ENCODE measurements at regions of chr22 and their contacts with region 1.

Region 1: GRCh38 chr22:17281440-17281841 is 62.2 kb upstream of the ADA2 start:
- DNase-seq: peak in 5 of 9 donors; percentile 27 to 55 (median 43)
- ATAC-seq: peak; percentile 56
- H3K4me3 ChIP-seq: no peak overlapping the region
- H3K4me3 Mint-ChIP-seq: peak overlapping the region; percentile 27 to 82 (median 71)
- H3K27ac ChIP-seq: no peak overlapping the region
- H3K27ac Mint-ChIP-seq: peak overlapping the region; percentile 1 to 95 (median 53)
- H3K4me1 ChIP-seq: peaks cover 0 to 10% of the 10 kb centered on the region in 2 donors
- H3K4me1 Mint-ChIP-seq: peaks cover 14 to 44% (median 16%) of the 10 kb centered on the region in 7 donors
- H3K27me3 ChIP-seq: no peaks in the 10 kb centered on the region
- H3K27me3 Mint-ChIP-seq: peaks cover 0 to 17% (median 0%) of the 10 kb centered on the region in 5 donors

Region 2: DNA sequence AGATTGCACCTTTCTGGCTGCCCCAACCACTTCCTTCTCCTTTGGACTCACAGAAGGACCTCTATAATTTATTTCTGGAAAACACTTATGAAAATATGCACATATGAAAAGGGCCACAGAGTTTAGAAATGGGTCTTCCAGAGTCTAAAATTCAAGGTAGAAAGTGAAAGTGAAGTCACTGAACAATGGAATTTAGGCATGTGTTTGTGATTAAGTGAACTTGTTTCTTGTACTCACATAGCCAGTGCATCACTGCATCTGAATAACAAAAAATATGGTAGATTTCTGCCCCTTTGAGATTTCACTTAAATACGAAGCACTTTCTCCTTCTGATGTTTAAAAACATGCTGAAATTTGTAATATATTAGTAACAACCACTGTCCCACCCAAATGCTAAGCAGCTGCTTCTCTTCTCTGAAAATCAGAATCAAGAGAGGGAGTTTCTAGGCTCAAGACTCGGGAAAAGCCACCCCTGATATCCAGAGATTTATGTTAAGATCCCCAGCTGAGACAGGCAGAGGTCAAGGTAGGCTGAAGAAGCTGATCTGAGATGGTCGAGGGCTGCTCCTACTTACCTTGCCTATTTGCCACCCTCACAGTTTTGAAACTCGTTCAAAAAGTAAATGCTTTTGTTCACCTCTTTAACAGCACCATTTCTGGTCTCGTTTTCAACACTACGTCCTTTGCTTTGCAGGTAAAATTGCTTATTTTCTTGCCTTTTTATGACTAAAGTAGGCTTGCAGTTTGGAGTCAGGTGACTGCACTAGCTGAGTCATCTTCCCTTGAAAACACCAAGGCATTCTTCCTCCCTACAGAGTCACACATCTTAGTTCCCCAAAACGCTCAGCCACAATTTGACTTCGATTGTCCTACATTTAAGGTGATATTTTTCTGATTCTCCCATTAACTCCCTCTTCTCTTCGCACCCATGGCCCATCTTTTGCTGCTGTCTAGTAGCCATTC is 456.4 kb before region 1 on chr22 and contains the start of gene XKR3:
- CTCF ChIA-PET with region 1: no interaction called
- POLR2A ChIA-PET with region 1: no interaction called
- intact Hi-C with region 1: no loop called
- DNase-seq: peak in 1 of 9 donors; percentile 6
- ATAC-seq: peak; percentile 68
- H3K4me3 ChIP-seq: peak within 1 kb of the TSS; percentile 15
- H3K4me3 Mint-ChIP-seq: peak within 1 kb of the TSS; percentile 64 to 86 (median 79)
- H3K27ac ChIP-seq: peak within 1 kb of the TSS; percentile 8
- H3K27ac Mint-ChIP-seq: peak within 1 kb of the TSS; percentile 16 to 87 (median 71)
- H3K4me1 ChIP-seq: peaks cover 0 to 4% of the 10 kb centered on the region in 2 donors
- H3K4me1 Mint-ChIP-seq: peaks cover 9 to 28% (median 22%) of the 10 kb centered on the region in 7 donors
- H3K27me3 ChIP-seq: no peaks in the 10 kb centered on the region
- H3K27me3 Mint-ChIP-seq: peaks cover 0 to 3% (median 0%) of the 10 kb centered on the region in 5 donors
- total RNA-seq, gene XKR3: not detected

Region 3: GRCh38 chr22:17237038-17237668 is 44.3 kb before region 1 on chr22:
- CTCF ChIA-PET with region 1: no interaction called
- POLR2A ChIA-PET with region 1: no interaction called
- intact Hi-C with region 1: loop called in 1 of 2 experiments (anchors 5 kb)
- DNase-seq: peak in 6 of 9 donors; percentile 31 to 50 (median 40)
- ATAC-seq: peak; percentile 80
- H3K4me3 ChIP-seq: peak overlapping the region; percentile 61
- H3K4me3 Mint-ChIP-seq: peak overlapping the region; percentile 78 to 96 (median 91)
- H3K27ac ChIP-seq: peak overlapping the region; percentile 73
- H3K27ac Mint-ChIP-seq: peak overlapping the region; percentile 92 to 99 (median 97)
- H3K4me1 ChIP-seq: peaks cover 0 to 12% of the 10 kb centered on the region in 2 donors
- H3K4me1 Mint-ChIP-seq: peaks cover 8 to 27% (median 11%) of the 10 kb centered on the region in 7 donors
- H3K27me3 ChIP-seq: no peaks in the 10 kb centered on the region
- H3K27me3 Mint-ChIP-seq: no peaks in the 10 kb centered on the region

Region 4: DNA sequence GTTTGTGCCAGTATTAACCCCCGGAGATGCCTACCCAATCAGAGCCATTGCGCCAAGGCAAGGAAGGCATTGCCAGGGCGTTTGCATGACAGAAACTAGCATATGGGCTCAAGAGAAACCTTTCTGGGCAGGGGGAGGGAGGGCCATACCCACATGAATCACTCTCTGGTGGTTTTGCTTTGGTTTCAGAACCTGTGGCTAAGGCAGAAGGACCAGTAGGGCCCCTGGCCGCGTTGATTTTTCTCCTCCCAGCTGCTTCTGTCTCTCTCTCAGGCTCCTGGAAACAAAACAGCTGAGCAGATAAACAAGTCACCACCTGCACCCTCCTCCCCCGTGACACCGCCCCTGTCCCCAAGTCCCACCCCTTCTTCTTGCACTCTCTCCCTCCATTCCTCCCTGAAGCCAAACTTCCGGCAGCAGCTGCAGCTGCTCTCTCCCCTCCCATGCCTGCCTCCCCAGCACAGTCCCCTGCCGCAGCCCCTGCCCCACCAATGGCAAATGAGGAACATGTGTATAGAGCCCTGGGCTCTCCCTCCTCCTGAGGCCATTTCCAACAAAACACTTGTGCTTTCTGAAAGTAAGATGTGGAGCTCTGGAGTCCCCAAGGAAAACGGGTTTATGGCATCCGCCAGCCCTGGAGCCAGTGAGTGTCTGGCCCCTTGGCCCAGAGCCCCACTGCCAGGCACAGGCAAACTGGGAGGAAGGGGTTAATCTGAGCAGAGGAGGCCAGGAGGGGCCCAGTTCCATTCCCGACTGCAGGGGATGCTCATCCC is 23.2 kb before region 1 on chr22:
- CTCF ChIA-PET with region 1: no interaction called
- POLR2A ChIA-PET with region 1: interaction called, 3 read pairs
- intact Hi-C with region 1: loop called in 1 of 2 experiments (anchors 1 kb)
- DNase-seq: peak in 8 of 9 donors; percentile 37 to 65 (median 52)
- ATAC-seq: peak; percentile 82
- H3K4me3 ChIP-seq: peak overlapping the region; percentile 38
- H3K4me3 Mint-ChIP-seq: peak overlapping the region; percentile 23 to 82 (median 67)
- H3K27ac ChIP-seq: peak overlapping the region; percentile 41
- H3K27ac Mint-ChIP-seq: peak overlapping the region; percentile 59 to 93 (median 89)
- H3K4me1 ChIP-seq: peaks cover 0 to 20% of the 10 kb centered on the region in 2 donors
- H3K4me1 Mint-ChIP-seq: peaks cover 13 to 36% (median 26%) of the 10 kb centered on the region in 7 donors
- H3K27me3 ChIP-seq: no peaks in the 10 kb centered on the region
- H3K27me3 Mint-ChIP-seq: no peaks in the 10 kb centered on the region

Region 5: DNA sequence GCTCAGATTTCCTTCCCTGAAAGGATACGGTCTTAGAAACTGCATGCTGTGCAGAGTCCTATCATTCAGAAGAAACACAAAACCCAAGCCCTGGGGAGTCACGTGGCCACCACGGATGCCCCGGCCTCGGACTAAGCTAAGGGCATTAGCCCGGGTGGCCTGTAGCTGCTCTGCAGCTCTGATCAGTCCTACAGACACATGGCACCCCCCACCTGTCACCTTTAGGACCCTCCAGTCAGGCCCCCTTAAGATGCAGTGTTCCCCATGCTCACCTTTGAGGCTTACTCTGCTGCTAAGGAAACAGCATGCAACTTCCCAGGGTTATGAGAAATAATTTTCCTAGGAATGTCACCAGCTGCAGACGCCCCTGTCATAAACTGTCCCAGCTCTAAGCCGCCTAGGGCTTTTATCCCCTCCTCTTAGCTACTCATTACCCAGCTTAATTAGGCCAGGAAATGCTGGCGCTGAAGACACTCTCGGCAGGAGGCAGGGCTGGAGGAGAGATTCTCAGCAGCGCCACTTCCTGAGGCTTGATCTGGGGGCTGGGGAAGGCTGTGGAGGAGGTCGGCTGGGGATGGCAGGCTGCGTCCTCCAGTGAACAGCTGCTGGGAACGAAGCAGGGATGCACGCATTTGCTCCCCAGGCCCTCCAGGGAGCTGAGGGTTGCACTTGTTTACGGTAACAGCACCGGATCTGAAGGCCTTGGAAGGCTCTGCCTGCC is 15.0 kb before region 1 on chr22:
- CTCF ChIA-PET with region 1: interaction called, 3 read pairs
- POLR2A ChIA-PET with region 1: interaction called, 3 read pairs
- intact Hi-C with region 1: loop called in 1 of 2 experiments (anchors 2 kb)
- DNase-seq: peak in 5 of 9 donors; percentile 30 to 40 (median 33)
- ATAC-seq: peak; percentile 37
- H3K4me3 ChIP-seq: no peak overlapping the region
- H3K4me3 Mint-ChIP-seq: peak overlapping the region in 9 of 10 donors; percentile 5 to 75 (median 46)
- H3K27ac ChIP-seq: peak overlapping the region; percentile 39
- H3K27ac Mint-ChIP-seq: peak overlapping the region; percentile 71 to 91 (median 78)
- H3K4me1 ChIP-seq: peaks cover 0 to 11% of the 10 kb centered on the region in 2 donors
- H3K4me1 Mint-ChIP-seq: peaks cover 0 to 43% (median 29%) of the 10 kb centered on the region in 7 donors
- H3K27me3 ChIP-seq: no peaks in the 10 kb centered on the region
- H3K27me3 Mint-ChIP-seq: no peaks in the 10 kb centered on the region

Region 6: GRCh38 chr22:17303840-17304779 is 22.7 kb after region 1 on chr22:
- CTCF ChIA-PET with region 1: no interaction called
- POLR2A ChIA-PET with region 1: no interaction called
- intact Hi-C with region 1: loop called in 1 of 2 experiments (anchors 1 kb)
- DNase-seq: peak; percentile 9 to 78 (median 56)
- ATAC-seq: peak; percentile 97
- H3K4me3 ChIP-seq: peak overlapping the region; percentile 27
- H3K4me3 Mint-ChIP-seq: peak overlapping the region; percentile 7 to 86 (median 58)
- H3K27ac ChIP-seq: peak overlapping the region; percentile 51
- H3K27ac Mint-ChIP-seq: peak overlapping the region; percentile 36 to 95 (median 87)
- H3K4me1 ChIP-seq: peaks cover 12 to 14% of the 10 kb centered on the region in 2 donors
- H3K4me1 Mint-ChIP-seq: peaks cover 6 to 46% (median 28%) of the 10 kb centered on the region in 7 donors
- H3K27me3 ChIP-seq: no peaks in the 10 kb centered on the region
- H3K27me3 Mint-ChIP-seq: peaks cover 0 to 2% (median 0%) of the 10 kb centered on the region in 5 donors

Region 7: GRCh38 chr22:17334059-17334458 is 52.6 kb after region 1 on chr22:
- CTCF ChIA-PET with region 1: no interaction called
- POLR2A ChIA-PET with region 1: no interaction called
- intact Hi-C with region 1: no loop called
- DNase-seq: no peak
- ATAC-seq: no peak
- H3K4me3 ChIP-seq: no peak overlapping the region
- H3K4me3 Mint-ChIP-seq: no peak overlapping the region
- H3K27ac ChIP-seq: no peak overlapping the region
- H3K27ac Mint-ChIP-seq: no peak overlapping the region
- H3K4me1 ChIP-seq: no peaks in the 10 kb centered on the region
- H3K4me1 Mint-ChIP-seq: no peaks in the 10 kb centered on the region
- H3K27me3 ChIP-seq: no peaks in the 10 kb centered on the region
- H3K27me3 Mint-ChIP-seq: peaks cover 0 to 15% (median 5%) of the 10 kb centered on the region in 5 donors

Region 8: DNA sequence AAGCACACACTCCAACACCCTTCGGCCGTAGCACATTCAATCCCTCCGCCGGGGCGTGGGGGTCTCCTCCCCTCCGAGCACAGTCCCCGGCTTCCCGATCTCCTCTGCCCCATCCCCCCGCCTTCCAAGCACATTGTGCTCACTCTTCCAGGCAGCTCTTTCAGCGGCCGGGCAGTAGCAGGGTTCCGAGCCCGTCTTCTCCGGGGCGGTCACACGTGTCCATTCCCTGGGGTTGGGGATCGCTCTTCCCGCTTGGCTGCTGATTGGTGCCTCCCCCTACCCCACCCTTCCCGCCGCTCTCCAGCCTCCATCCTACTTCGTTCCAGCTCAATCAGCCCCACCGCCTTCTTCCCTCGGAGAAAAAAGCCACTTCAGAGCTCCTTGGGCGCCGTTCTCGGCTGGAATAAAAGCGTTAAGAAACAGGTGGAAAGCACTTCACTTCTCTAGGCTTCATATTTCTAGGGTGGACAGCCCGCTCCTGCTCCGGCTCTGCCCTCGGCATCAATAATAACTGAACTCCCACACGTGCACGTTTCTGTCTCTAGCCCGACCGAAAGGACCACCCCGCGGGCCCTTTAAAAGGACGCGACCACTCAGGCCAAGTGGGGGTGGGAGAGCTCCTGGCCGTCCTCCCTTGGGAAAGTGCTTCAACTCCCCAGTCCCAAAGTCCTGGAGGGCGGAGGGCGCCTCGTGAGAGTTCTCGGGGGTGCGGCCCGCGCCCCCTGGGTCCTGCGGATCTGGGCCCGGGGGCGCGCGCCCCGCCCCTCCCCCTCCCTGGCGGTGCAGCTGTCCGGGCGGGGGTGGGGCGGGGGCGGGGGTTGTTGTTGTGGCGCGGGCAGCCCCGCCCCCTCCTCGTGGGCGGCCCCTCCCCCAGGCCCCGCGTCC is 87.4 kb after region 1 on chr22:
- CTCF ChIA-PET with region 1: no interaction called
- POLR2A ChIA-PET with region 1: no interaction called
- intact Hi-C with region 1: loop called in 1 of 2 experiments (anchors 2 kb)
- DNase-seq: peak in 3 of 9 donors; percentile 9 to 26 (median 16)
- ATAC-seq: peak; percentile 6
- H3K4me3 ChIP-seq: no peak overlapping the region
- H3K4me3 Mint-ChIP-seq: peak overlapping the region; percentile 75 to 86 (median 81)
- H3K27ac ChIP-seq: no peak overlapping the region
- H3K27ac Mint-ChIP-seq: peak overlapping the region in 2 of 9 donors; percentile 38 to 55
- H3K4me1 ChIP-seq: peaks cover 0 to 14% of the 10 kb centered on the region in 2 donors
- H3K4me1 Mint-ChIP-seq: peaks cover 13 to 35% (median 28%) of the 10 kb centered on the region in 7 donors
- H3K27me3 ChIP-seq: peaks cover 0 to 16% of the 10 kb centered on the region in 2 donors
- H3K27me3 Mint-ChIP-seq: peaks cover 53 to 68% (median 54%) of the 10 kb centered on the region in 5 donors

Region 9: GRCh38 chr22:17773606-17774205 is 492.3 kb after region 1 on chr22:
- CTCF ChIA-PET with region 1: no interaction called
- POLR2A ChIA-PET with region 1: no interaction called
- intact Hi-C with region 1: no loop called
- DNase-seq: peak in 5 of 9 donors; percentile 39 to 76 (median 41)
- ATAC-seq: peak; percentile 40
- H3K4me3 ChIP-seq: peak overlapping the region; percentile 64
- H3K4me3 Mint-ChIP-seq: peak overlapping the region; percentile 76 to 95 (median 90)
- H3K27ac ChIP-seq: peak overlapping the region; percentile 69
- H3K27ac Mint-ChIP-seq: peak overlapping the region in 8 of 9 donors; percentile 72 to 93 (median 82)
- H3K4me1 ChIP-seq: peaks cover 46 to 63% of the 10 kb centered on the region in 2 donors
- H3K4me1 Mint-ChIP-seq: peaks cover 48 to 81% (median 61%) of the 10 kb centered on the region in 7 donors
- H3K27me3 ChIP-seq: no peaks in the 10 kb centered on the region
- H3K27me3 Mint-ChIP-seq: peaks cover 0 to 8% (median 0%) of the 10 kb centered on the region in 5 donors